ENCODE measurements at regions of chr4 and their contacts with region 1.

Region 1: GRCh38 chr4:150462723-150463122 is 119.2 kb upstream of the MAB21L2 start:
- DNase-seq: no peak
- CTCF ChIP-seq: no peak

Region 2: DNA sequence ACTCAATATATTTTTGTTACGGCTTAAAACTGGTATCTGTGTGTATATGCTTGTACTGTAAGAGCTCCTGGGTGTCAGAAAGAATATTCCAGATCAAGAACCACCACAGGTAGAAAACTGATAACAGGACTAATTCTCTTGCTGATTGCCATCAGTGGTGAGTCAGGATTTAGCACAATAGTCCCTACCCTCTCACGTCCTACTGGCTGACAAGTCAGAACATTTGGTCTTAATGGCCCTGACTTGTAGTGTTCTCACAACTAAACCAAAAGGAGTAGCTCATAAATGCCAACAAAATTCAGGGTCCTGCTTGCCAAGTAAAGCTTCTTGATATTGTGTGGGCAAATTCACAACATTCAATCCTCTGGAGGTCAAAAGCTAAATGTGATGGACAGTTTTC is 14.1 kb after region 1 on chr4:
- CTCF ChIA-PET with region 1: interaction called, 10 read pairs
- POLR2A ChIA-PET with region 1: no interaction called
- DNase-seq: no peak
- CTCF ChIP-seq: no peak